Stomach (tissue), 19 donors: ENCODE measurements at regions of chr14 and their contacts with region 1.

Region 1: GRCh38 chr14:63394841-63395240 is 76.1 kb upstream of the GPHB5 start:
- DNase-seq: no peak
- H3K4me3 ChIP-seq: no peak overlapping the region
- H3K27ac ChIP-seq: no peak overlapping the region
- H3K4me1 ChIP-seq: no peaks in the 10 kb centered on the region
- H3K27me3 ChIP-seq: no peaks in the 10 kb centered on the region
- CTCF ChIP-seq: no peak
- EP300 ChIP-seq: no peak
- POLR2A ChIP-seq: no peak

Region 2: DNA sequence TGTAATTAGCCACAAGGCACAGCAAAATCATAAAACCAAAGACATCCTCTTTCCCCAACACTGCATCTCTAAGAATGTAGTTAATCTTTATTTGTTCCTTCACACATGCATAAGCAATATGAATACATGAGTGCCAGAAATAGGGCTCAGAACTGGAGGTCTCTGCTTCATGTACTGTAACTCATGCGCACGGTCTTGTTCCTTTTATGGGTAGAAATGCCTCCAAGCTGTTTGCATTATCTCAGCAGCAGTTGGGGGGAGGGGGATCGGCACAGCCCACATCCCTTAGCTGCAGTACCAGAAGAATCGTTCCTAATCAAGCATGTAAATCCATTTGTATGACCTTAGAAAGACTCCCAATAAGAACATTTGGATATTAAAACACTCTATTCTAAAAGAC is 170.6 kb before region 1 on chr14:
- intact Hi-C with region 1: no loop called
- DNase-seq: peak in 1 of 2 donors; percentile 79
- H3K4me3 ChIP-seq: no peak overlapping the region
- H3K27ac ChIP-seq: peak overlapping the region in 1 of 5 donors; percentile 26
- H3K4me1 ChIP-seq: peaks cover 0 to 20% (median 0%) of the 10 kb centered on the region in 4 donors
- H3K27me3 ChIP-seq: no peaks in the 10 kb centered on the region
- CTCF ChIP-seq: no peak
- EP300 ChIP-seq: no peak
- POLR2A ChIP-seq: no peak

Region 3: DNA sequence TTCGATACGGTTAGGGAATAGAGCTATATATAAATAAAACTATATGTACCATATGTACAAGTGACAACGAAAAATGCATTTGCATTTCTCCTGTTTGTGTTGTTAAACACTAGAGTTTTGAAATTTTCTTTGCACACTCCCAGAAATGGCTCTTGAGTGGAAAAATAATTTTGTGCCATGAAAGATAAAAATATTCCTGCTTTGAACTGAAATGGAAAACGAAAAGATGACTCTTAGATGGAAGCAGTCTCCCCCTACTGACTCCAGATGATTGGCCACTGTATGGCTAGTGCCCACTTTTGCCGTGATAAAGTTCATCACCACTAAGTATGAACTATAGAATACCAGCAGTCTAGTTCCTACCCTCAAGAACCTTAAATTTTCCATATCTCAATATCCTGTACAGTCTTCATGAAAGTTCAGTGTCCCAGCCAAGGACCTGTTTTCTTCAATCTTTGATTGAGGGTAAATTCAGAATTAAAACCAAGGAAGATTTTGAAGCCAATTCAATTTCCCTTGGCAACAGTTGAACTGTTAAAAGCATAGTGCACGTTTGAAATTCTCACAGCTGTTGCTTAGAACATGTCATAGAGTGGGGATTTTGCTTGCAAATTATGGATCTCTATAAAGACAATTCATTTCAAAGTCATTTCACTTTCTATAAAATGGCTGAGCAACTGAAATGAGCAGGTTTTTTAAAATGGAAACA is 149.9 kb after region 1 on chr14:
- intact Hi-C with region 1: loop called (anchors 5 kb)
- DNase-seq: peak in 1 of 2 donors; percentile 26
- H3K4me3 ChIP-seq: peak overlapping the region in 3 of 4 donors; percentile 83 to 98 (median 90)
- H3K27ac ChIP-seq: no peak overlapping the region
- H3K4me1 ChIP-seq: peaks cover 8 to 33% (median 23%) of the 10 kb centered on the region in 4 donors
- H3K27me3 ChIP-seq: no peaks in the 10 kb centered on the region
- CTCF ChIP-seq: peak in 3 of 7 experiments; percentile 21 to 29 (median 24)
- EP300 ChIP-seq: no peak
- POLR2A ChIP-seq: no peak